Left colon (tissue), 2 donors: ENCODE measurements at regions of chr2 and their contacts with region 1.

Region 1: DNA sequence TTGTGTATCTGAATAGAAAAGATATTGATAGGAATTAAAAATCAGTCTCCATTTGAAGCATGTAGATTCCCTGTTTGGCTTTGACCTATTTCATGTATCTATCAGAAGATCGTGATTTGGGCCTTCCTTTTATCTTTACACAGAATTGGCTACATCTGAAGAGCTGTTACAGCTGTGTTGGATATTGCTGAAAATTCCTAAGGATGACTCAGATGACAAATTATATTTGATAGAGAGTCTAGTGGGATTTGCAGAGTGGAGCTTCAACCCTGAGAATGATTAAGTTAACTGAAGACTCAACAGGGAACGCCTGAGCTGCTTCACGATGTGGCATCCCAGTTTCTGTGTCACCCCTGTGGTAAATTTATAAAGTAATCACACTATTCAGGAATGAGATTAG is 4.9 kb upstream of the COL3A1 start:
- DNase-seq: no peak
- ATAC-seq: no peak

Region 2: GRCh38 chr2:188788621-188789020 is 180.6 kb before region 1 on chr2:
- intact Hi-C with region 1: loop called in 1 of 2 experiments (anchors 5 kb)
- DNase-seq: peak; percentile 28 to 49
- ATAC-seq: no peak

Region 3: GRCh38 chr2:188798159-188798558 is 171.1 kb before region 1 on chr2:
- intact Hi-C with region 1: loop called in 1 of 2 experiments (anchors 5 kb)
- DNase-seq: no peak
- ATAC-seq: no peak

Region 4: GRCh38 chr2:188897096-188897495 is 72.1 kb before region 1 on chr2:
- intact Hi-C with region 1: loop called in 1 of 2 experiments (anchors 10 kb)
- DNase-seq: no peak
- ATAC-seq: no peak

Region 5: GRCh38 chr2:190551928-190552327 is 1582.7 kb after region 1 on chr2:
- intact Hi-C with region 1: no loop called
- DNase-seq: no peak
- ATAC-seq: no peak